Activated naive CD4-positive, alpha-beta T cell treated with anti-CD3 and anti-CD28 coated beads, Interleukin-2, amount 10 ng/mL, durations not matched to agents 7 days and 5 days (primary cell): ENCODE measurements at regions of chr15 and their contacts with region 1.

Region 1: DNA sequence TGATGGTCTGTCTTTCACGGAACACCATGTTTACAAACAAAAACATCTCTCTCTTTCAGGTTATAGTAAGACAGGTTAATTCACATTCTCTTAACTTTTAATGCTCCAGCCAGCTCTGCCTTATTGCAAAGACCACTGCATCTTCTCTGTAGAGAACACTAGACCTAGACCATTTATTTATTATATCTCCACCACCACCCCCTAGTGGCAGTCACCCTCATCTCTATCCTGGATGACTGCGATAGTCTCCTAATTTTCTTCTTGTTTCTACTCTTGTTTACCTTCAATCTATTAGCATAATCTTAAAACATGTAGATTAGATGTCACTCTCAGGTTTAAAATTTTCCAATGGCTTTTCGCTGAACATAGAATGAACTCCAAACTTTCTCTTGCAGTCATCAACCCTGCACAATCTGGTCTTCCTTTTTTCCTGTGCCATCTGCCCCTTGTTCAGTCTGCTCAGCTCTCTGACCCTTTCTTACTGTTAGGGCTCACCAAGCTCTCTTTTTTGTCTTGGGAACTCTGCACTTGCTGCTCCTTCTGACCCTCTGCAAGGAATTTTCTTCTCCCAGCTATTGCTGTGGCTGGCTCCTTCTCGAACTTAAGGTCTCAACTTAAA is 155.6 kb downstream of the SQOR start:
- DNase-seq: peak; percentile 31
- H3K4me3 Mint-ChIP-seq: no peak overlapping the region
- H3K27ac Mint-ChIP-seq: no peak overlapping the region
- H3K4me1 Mint-ChIP-seq: no peaks in the 10 kb centered on the region
- H3K27me3 Mint-ChIP-seq: peaks cover 9% of the 10 kb centered on the region

Region 2: GRCh38 chr15:45705510-45706473 is 84.6 kb before region 1 on chr15:
- CTCF ChIA-PET with region 1: interaction called, 17 read pairs
- DNase-seq: peak; percentile 77
- H3K4me3 Mint-ChIP-seq: peak overlapping the region; percentile 83
- H3K27ac Mint-ChIP-seq: no peak overlapping the region
- H3K4me1 Mint-ChIP-seq: peaks cover 15% of the 10 kb centered on the region
- H3K27me3 Mint-ChIP-seq: peaks cover 37% of the 10 kb centered on the region

Region 3: DNA sequence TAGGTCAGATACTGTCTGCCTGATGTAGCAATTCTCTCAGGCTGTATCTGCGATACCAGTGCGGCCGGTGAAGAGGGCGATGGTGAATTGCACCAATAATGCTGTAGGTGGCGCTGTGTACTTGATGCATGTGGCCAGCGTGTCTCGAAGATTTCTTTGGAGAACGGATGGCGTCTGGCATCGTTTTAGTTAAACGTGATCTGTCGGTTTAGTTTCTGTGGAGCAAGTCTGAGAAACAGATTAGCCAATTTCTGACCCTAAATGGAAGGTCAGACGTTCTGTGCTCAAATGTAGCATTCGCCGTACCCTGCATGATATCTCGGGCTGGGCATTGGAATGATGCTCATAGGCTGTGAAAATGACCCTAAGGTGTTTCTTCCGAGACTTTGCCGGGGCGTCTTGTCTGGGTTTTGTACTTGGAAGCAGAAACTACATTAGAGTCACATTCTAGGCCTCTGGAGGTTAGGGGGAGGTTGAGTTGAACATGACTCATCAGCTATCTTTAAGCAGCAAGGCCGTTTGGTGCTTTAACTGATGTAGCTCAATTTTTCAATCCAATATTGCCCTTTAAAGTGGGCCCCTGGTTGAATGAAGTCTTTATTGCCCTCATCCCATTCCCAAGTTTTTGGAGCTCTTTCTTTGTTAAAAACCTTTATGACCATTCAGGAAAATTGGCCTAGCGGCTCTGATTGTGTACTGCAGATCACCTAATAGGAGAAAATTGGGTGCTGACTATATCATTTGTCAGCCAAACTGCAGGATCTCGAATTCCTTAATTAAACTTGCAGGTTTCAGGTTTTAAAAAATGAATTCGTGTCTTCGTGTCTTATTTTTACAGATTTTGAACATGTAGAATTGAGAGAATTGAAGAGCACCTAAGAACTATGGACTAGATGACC is 75.6 kb before region 1 on chr15:
- CTCF ChIA-PET with region 1: interaction called, 11 read pairs
- DNase-seq: peak; percentile 61
- H3K4me3 Mint-ChIP-seq: no peak overlapping the region
- H3K27ac Mint-ChIP-seq: no peak overlapping the region
- H3K4me1 Mint-ChIP-seq: no peaks in the 10 kb centered on the region
- H3K27me3 Mint-ChIP-seq: peaks cover 8% of the 10 kb centered on the region

Region 4: DNA sequence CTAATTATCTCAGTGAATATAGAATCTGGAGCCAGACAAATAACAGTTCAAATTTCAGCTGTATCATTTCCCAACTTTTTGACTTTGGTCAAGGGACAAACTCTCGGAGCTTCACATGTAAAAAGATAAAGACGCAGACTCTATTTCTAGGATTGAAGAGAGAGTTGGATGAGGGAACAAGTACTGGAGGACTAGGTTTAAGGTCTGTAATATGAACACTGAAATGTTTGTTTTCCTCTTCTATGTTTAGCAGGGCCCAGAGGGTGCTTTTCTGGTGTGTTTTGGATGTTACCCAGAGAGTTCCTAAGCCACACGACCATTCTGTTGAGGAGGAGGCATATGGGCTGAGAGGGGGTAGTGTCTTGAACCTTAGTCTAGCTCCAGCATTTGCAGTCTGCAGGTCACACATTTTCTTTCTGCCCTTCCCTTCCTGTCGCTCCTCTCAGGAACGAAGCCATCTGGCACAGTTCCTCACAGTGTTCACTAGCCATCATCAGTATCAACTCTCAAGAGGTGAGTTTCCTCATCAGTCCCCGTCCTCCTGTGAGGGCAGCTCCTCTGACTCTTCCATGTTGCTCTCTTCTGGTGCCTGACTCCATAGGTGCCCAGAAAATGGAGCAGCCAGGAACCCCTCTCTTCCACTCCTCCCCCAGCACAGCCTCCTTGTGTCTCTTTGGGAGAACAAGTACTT is 94.5 kb after region 1 on chr15:
- CTCF ChIA-PET with region 1: no interaction called
- DNase-seq: no peak
- H3K4me3 Mint-ChIP-seq: no peak overlapping the region
- H3K27ac Mint-ChIP-seq: no peak overlapping the region
- H3K4me1 Mint-ChIP-seq: no peaks in the 10 kb centered on the region
- H3K27me3 Mint-ChIP-seq: no peaks in the 10 kb centered on the region

Region 5: GRCh38 chr15:46146002-46146401 is 355.6 kb after region 1 on chr15:
- CTCF ChIA-PET with region 1: no interaction called
- DNase-seq: no peak
- H3K4me3 Mint-ChIP-seq: no peak overlapping the region
- H3K27ac Mint-ChIP-seq: no peak overlapping the region
- H3K4me1 Mint-ChIP-seq: no peaks in the 10 kb centered on the region
- H3K27me3 Mint-ChIP-seq: no peaks in the 10 kb centered on the region